ENCODE measurements at regions of chr16 and their contacts with region 1.

Region 1: GRCh38 chr16:20734056-20734455 is 7.6 kb downstream of the THUMPD1 start:
- DNase-seq: no peak
- ATAC-seq: no peak
- H3K4me3 ChIP-seq: no peak overlapping the region
- H3K27ac ChIP-seq: no peak overlapping the region
- H3K4me1 ChIP-seq: no peaks in the 10 kb centered on the region; the same call in 2 of the 3 replicates
- CTCF ChIP-seq: no peak
- EP300 ChIP-seq: no peak
- POLR2A ChIP-seq: no peak
- RAD21 ChIP-seq: no peak

Region 2: GRCh38 chr16:19858340-19859018 is 875.6 kb before region 1 on chr16:
- CTCF ChIA-PET with region 1: no interaction called
- POLR2A ChIA-PET with region 1: interaction called, 12 read pairs
- DNase-seq: no peak
- ATAC-seq: no peak
- H3K4me3 ChIP-seq: no peak overlapping the region
- H3K27ac ChIP-seq: no peak overlapping the region
- H3K4me1 ChIP-seq: no peaks in the 10 kb centered on the region
- CTCF ChIP-seq: no peak
- EP300 ChIP-seq: no peak
- POLR2A ChIP-seq: no peak
- RAD21 ChIP-seq: no peak

Region 3: GRCh38 chr16:20720251-20720650 is 13.8 kb before region 1 on chr16:
- CTCF ChIA-PET with region 1: no interaction called
- POLR2A ChIA-PET with region 1: no interaction called
- DNase-seq: no peak
- ATAC-seq: no peak
- H3K4me3 ChIP-seq: no peak overlapping the region
- H3K27ac ChIP-seq: no peak overlapping the region
- H3K4me1 ChIP-seq: no peaks in the 10 kb centered on the region
- CTCF ChIP-seq: no peak
- EP300 ChIP-seq: no peak
- POLR2A ChIP-seq: no peak
- RAD21 ChIP-seq: no peak